H1 (cell line): ENCODE measurements at regions of chr3 and their contacts with region 1.

Region 1: GRCh38 chr3:193572426-193572908 is 17.8 kb upstream of the ATP13A4 start:
- DNase-seq: peak in 1 of 2 experiments; percentile 70
- H3K4me3 ChIP-seq: no peak overlapping the region
- H3K27ac ChIP-seq: no peak overlapping the region
- H3K4me1 ChIP-seq: no peaks in the 10 kb centered on the region; a peak in 1 of 7 replicates
- H3K27me3 ChIP-seq: no peaks in the 10 kb centered on the region
- CTCF ChIP-seq: peak; percentile 45 to 94 (median 80)
- EP300 ChIP-seq: no peak
- POLR2A ChIP-seq: no peak
- RAD21 ChIP-seq: peak; percentile 96

Region 2: GRCh38 chr3:193132964-193133363 is 439.5 kb before region 1 on chr3:
- CTCF ChIA-PET with region 1: interaction called, 11 read pairs
- POLR2A ChIA-PET with region 1: no interaction called
- DNase-seq: no peak
- H3K4me3 ChIP-seq: no peak overlapping the region
- H3K27ac ChIP-seq: no peak overlapping the region
- H3K4me1 ChIP-seq: peaks cover 0 to 6% (median 0%) of the 10 kb centered on the region in 4 experiments; a peak in 1 of 7 replicates
- H3K27me3 ChIP-seq: no peaks in the 10 kb centered on the region
- CTCF ChIP-seq: no peak
- EP300 ChIP-seq: no peak
- POLR2A ChIP-seq: no peak
- RAD21 ChIP-seq: no peak

Region 3: GRCh38 chr3:193457526-193457925 is 114.9 kb before region 1 on chr3:
- CTCF ChIA-PET with region 1: interaction called, 43 read pairs
- POLR2A ChIA-PET with region 1: no interaction called
- DNase-seq: no peak
- H3K4me3 ChIP-seq: no peak overlapping the region
- H3K27ac ChIP-seq: no peak overlapping the region
- H3K4me1 ChIP-seq: no peaks in the 10 kb centered on the region
- H3K27me3 ChIP-seq: no peaks in the 10 kb centered on the region
- CTCF ChIP-seq: no peak
- EP300 ChIP-seq: no peak
- POLR2A ChIP-seq: no peak
- RAD21 ChIP-seq: no peak

Region 4: DNA sequence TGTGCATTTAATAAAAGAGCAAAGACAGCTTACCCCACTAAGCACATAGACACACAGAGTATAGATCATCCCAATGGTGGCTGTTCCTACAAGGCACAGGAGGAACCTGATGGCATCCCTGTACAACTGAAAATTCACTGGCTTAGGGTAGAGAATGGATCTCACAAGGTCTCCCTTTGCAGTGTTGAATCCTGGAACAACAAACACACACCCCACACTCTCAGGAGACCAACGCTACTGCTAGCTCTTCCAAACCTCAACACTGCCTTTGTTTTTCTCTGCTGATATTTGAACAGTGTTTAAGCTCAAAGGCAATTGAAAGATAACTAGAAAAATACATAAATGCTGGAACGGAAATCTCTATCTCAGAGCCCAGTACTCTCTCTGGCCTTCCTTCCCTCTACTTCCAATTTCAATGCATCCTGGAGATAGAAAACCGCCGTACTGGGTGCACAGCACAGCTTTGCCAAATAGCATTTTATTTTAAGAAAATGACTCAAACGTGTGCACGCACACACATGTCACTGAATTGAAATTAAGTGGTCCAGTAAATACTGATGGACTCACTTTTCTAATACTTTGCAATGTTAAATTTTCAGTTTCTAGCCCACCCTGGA is 106.4 kb before region 1 on chr3:
- CTCF ChIA-PET with region 1: interaction called, 43 read pairs
- POLR2A ChIA-PET with region 1: no interaction called
- DNase-seq: no peak
- H3K4me3 ChIP-seq: no peak overlapping the region
- H3K27ac ChIP-seq: no peak overlapping the region
- H3K4me1 ChIP-seq: no peaks in the 10 kb centered on the region; a peak in 1 of 7 replicates
- H3K27me3 ChIP-seq: no peaks in the 10 kb centered on the region
- CTCF ChIP-seq: no peak
- EP300 ChIP-seq: no peak
- POLR2A ChIP-seq: no peak
- RAD21 ChIP-seq: no peak